ENCODE measurements at regions of chr1 and their contacts with region 1.

Region 1: DNA sequence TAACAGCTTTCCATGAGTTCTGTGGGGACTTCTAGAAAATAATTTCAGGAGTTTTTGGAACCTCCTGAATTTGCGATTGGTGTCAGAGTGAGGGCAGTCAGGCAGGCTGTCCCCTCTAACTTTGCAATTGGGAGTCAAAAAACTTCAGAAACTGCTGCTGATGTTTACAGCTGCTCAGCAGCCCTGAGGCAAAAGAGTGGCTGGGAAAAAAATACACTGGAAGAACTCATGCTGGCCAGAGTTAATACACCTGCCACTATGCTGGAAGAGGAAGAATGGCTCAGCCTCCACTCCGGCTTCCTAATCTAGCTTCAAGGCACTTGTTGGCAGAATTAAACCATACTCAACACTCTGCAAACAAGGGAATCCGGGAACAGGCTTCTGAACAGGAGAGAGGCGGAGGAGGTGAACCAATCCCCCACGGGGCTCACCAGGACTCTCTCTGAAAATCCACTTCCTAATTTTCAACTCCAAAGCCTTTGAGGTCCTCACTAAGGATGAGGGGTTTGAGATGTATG is 120.0 kb downstream of the CCDC185 start:
- DNase-seq: no peak
- H3K4me3 Mint-ChIP-seq: no peak overlapping the region
- H3K27ac Mint-ChIP-seq: no peak overlapping the region
- H3K4me1 Mint-ChIP-seq: peaks cover 7% of the 10 kb centered on the region
- H3K27me3 Mint-ChIP-seq: no peaks in the 10 kb centered on the region
- CTCF ChIP-seq: no peak

Region 2: GRCh38 chr1:223331929-223332328 is 181.3 kb before region 1 on chr1:
- CTCF ChIA-PET with region 1: no interaction called
- POLR2A ChIA-PET with region 1: no interaction called
- intact Hi-C with region 1: no loop called
- DNase-seq: peak; percentile 62
- H3K4me3 Mint-ChIP-seq: no peak overlapping the region
- H3K27ac Mint-ChIP-seq: no peak overlapping the region
- H3K4me1 Mint-ChIP-seq: peaks cover 9% of the 10 kb centered on the region
- H3K27me3 Mint-ChIP-seq: peaks cover 31% of the 10 kb centered on the region
- CTCF ChIP-seq: no peak

Region 3: GRCh38 chr1:223500560-223501425 is 12.5 kb before region 1 on chr1:
- CTCF ChIA-PET with region 1: interaction called, 6 read pairs
- POLR2A ChIA-PET with region 1: interaction called, 10 read pairs
- intact Hi-C with region 1: no loop called
- DNase-seq: peak; percentile 100
- H3K4me3 Mint-ChIP-seq: no peak overlapping the region
- H3K27ac Mint-ChIP-seq: peak overlapping the region; percentile 78
- H3K4me1 Mint-ChIP-seq: peaks cover 30% of the 10 kb centered on the region
- H3K27me3 Mint-ChIP-seq: no peaks in the 10 kb centered on the region
- CTCF ChIP-seq: no peak

Region 4: GRCh38 chr1:223802602-223803001 is 289.4 kb after region 1 on chr1:
- CTCF ChIA-PET with region 1: no interaction called
- POLR2A ChIA-PET with region 1: no interaction called
- intact Hi-C with region 1: no loop called
- DNase-seq: no peak
- H3K4me3 Mint-ChIP-seq: no peak overlapping the region
- H3K27ac Mint-ChIP-seq: peak overlapping the region; percentile 50
- H3K4me1 Mint-ChIP-seq: no peaks in the 10 kb centered on the region
- H3K27me3 Mint-ChIP-seq: no peaks in the 10 kb centered on the region
- CTCF ChIP-seq: no peak